Esophagus muscularis mucosa (tissue), 4 donors: ENCODE measurements at regions of chr3 and their contacts with region 1.

Region 1: GRCh38 chr3:142828703-142829305 is 60.1 kb downstream of the PCOLCE2 start:
- DNase-seq: no peak
- H3K4me3 ChIP-seq: no peak overlapping the region
- H3K27ac ChIP-seq: no peak overlapping the region
- H3K4me1 ChIP-seq: peaks cover 0 to 2% (median 0%) of the 10 kb centered on the region in 4 donors
- H3K27me3 ChIP-seq: no peaks in the 10 kb centered on the region
- CTCF ChIP-seq: peak; percentile 78 to 85 (median 81)
- EP300 ChIP-seq: no peak
- POLR2A ChIP-seq: no peak

Region 2: DNA sequence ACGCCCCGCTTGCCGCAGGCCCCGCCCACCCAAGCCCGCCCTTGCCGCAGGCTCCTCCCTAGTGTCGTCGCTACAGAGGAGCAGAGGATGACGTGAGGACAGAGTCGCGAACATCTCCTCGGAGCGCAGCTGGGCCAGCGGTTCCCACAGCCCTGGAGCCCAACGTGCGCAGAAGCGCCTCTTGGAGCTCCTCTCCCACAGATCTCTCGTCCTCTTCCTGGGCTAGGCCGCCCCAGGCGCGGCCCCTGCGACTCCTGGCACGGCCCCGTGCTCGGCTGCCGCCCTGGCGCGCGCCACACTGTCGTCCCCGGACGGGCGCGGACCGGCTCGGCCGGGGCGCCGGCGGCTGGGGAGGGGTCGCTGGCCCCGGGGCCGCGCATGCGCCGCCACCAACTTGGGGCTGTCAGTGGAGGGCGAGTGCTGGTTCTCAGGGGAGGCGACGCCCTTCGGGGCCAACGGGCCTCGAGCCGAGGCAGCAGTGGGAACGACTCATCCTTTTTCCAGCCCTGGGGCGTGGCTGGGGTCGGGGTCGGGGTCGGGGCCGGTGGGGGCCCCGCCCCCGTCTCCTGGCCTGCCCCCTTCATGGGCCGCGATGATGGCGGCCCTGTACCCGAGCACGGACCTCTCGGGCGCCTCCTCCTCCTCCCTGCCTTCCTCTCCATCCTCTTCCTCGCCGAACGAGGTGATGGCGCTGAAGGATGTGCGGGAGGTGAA is 104.7 kb before region 1 on chr3 and contains the start of gene TRPC1:
- intact Hi-C with region 1: no loop called
- DNase-seq: peak; percentile 95
- H3K4me3 ChIP-seq: peak within 1 kb of the TSS; percentile 76 to 95 (median 90)
- H3K27ac ChIP-seq: peak within 1 kb of the TSS; percentile 91 to 96 (median 93)
- H3K4me1 ChIP-seq: peaks cover 0 to 24% (median 22%) of the 10 kb centered on the region in 4 donors
- H3K27me3 ChIP-seq: no peaks in the 10 kb centered on the region
- CTCF ChIP-seq: no peak
- EP300 ChIP-seq: no peak
- POLR2A ChIP-seq: peak; percentile 55
- total RNA-seq, gene TRPC1: 19.5 to 31.1 (median 23.2) TPM

Region 3: DNA sequence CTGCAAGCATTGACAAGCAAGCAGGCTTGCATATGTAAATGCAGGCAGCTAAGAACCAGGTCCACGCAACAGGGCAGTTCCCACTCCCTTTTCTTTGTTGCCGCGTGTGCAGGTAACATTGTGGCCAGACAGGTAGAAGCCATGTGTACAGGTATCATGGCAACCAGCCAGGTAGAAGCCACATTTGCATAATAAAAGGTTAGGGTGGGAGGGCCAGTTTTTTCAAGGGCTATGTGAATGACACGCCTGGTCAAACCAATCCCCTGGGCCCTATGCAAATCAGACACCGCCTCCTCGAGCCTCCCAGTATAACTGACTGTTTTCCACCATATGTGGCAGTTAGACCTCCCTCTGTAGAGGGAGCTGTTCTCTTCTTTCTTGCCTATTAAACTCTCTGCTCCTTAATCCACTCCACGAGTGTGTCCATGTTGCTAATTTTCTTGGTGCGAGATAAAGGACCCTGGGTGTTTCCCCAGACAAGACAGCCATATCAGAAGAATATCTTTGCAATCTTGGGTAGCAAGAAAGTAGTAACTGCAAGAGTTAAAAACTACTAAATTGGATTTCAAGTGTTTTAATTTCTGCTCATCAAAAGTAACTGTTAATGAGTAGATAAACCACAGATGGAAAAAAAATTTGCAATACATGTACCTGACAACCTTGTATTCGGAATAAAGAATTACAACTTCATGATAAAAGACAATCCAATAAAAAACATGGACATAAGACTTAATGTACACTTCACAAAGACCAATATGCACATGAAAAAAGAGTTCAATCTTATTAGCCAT is 38.2 kb after region 1 on chr3:
- intact Hi-C with region 1: no loop called
- DNase-seq: no peak
- H3K4me3 ChIP-seq: no peak overlapping the region
- H3K27ac ChIP-seq: no peak overlapping the region
- H3K4me1 ChIP-seq: no peaks in the 10 kb centered on the region
- H3K27me3 ChIP-seq: peaks cover 0 to under 1% (median 0%) of the 10 kb centered on the region in 4 donors
- CTCF ChIP-seq: no peak
- EP300 ChIP-seq: no peak
- POLR2A ChIP-seq: no peak

Region 4: DNA sequence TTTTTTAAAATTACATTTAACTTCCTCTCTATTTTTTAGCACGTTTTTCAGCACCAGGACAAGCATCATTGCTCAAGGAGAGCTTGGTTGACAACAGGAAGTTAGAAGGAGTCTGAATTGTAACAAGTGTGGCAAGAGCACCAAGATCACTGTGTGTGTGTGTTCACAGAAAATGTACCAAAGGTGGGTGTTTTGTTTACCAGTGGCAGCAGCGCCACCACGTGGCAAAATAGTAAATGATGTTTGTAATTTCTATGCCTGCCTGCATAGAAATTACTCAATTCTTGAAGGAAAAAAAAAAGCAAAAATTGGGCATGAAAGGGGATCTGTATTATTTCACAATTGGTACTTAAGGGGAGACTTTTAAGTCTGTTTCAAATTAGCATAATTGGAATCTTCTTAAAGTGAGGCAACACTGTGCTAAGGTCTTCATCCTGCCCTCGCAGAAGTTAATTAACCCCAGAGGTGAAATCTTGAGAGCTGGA is 165.2 kb after region 1 on chr3:
- intact Hi-C with region 1: loop called (anchors 2 kb)
- DNase-seq: no peak
- H3K4me3 ChIP-seq: no peak overlapping the region
- H3K27ac ChIP-seq: no peak overlapping the region
- H3K4me1 ChIP-seq: peaks cover 0 to 5% (median 1%) of the 10 kb centered on the region in 4 donors
- H3K27me3 ChIP-seq: no peaks in the 10 kb centered on the region
- CTCF ChIP-seq: peak; percentile 47 to 62 (median 60)
- EP300 ChIP-seq: no peak
- POLR2A ChIP-seq: no peak